GM10248 (cell line): ENCODE measurements at regions of chr12 and their contacts with region 1.

Region 1: GRCh38 chr12:26264215-26264838 is 69.0 kb downstream of the SSPN start:
- DNase-seq: no peak
- CTCF ChIP-seq: no peak

Region 2: GRCh38 chr12:26251600-26251999 is 12.7 kb before region 1 on chr12:
- CTCF ChIA-PET with region 1: interaction called, 13 read pairs
- POLR2A ChIA-PET with region 1: no interaction called
- DNase-seq: no peak
- CTCF ChIP-seq: no peak

Region 3: GRCh38 chr12:26274441-26275312 is 10.3 kb after region 1 on chr12:
- CTCF ChIA-PET with region 1: interaction called, 10 read pairs
- POLR2A ChIA-PET with region 1: no interaction called
- DNase-seq: peak; percentile 80
- CTCF ChIP-seq: no peak

Region 4: DNA sequence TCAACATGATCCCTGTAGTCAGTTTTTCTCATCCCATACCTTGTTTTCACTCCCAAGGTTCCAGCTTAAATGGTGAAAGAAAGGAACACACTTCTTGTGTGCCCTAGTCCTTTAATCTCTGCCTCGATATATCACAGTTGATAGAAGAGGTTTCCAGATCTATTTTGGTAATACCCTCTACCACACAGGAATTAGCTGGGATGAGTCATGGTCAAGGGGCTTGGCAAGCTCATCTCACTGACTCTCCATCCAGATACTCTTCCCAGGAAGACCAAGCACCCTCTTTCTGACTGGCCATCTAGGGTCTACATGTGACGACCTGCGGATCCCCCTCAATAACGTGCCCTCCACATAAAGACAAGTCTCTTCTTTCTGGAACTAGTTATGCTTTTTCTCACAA is 290.8 kb after region 1 on chr12:
- CTCF ChIA-PET with region 1: no interaction called
- POLR2A ChIA-PET with region 1: no interaction called
- DNase-seq: no peak
- CTCF ChIP-seq: no peak